GM12878 (cell line): ENCODE measurements at regions of chr6 and their contacts with region 1.

Region 1: GRCh38 chr6:131063028-131063763 is at the start of gene EPB41L2:
- DNase-seq: peak; percentile 26
- ATAC-seq: peak; percentile 82
- H3K4me3 ChIP-seq: peak within 1 kb of the TSS; percentile 88
- H3K27ac ChIP-seq: peak within 1 kb of the TSS; percentile 67
- H3K4me1 ChIP-seq: peaks cover 6% of the 10 kb centered on the region
- H3K27me3 ChIP-seq: no peaks in the 10 kb centered on the region
- CTCF ChIP-seq: no peak
- EP300 ChIP-seq: no peak
- POLR2A ChIP-seq: peak; percentile 92
- RAD21 ChIP-seq: 0 out of 2 replicates have a peak, but pooled peaks have one; percentile 14
- polyA plus RNA-seq, gene EPB41L2: 7.4 to 10.3 TPM

Region 2: GRCh38 chr6:130906736-130907381 is 156.3 kb before region 1 on chr6:
- CTCF ChIA-PET with region 1: no interaction called
- POLR2A ChIA-PET with region 1: no interaction called
- RAD21 ChIA-PET with region 1: interaction called, 5 read pairs
- SMC1A ChIA-PET with region 1: no interaction called
- in situ Hi-C with region 1: no loop called
- intact Hi-C with region 1: loop called (anchors 5 kb)
- DNase-seq: no peak
- ATAC-seq: peak; percentile 65
- H3K4me3 ChIP-seq: no peak overlapping the region
- H3K27ac ChIP-seq: no peak overlapping the region
- H3K4me1 ChIP-seq: peaks cover 15% of the 10 kb centered on the region
- H3K27me3 ChIP-seq: no peaks in the 10 kb centered on the region
- CTCF ChIP-seq: no peak
- EP300 ChIP-seq: no peak
- POLR2A ChIP-seq: no peak
- RAD21 ChIP-seq: no peak

Region 3: GRCh38 chr6:130937942-130938604 is 125.1 kb before region 1 on chr6:
- CTCF ChIA-PET with region 1: no interaction called
- POLR2A ChIA-PET with region 1: no interaction called
- RAD21 ChIA-PET with region 1: no interaction called
- SMC1A ChIA-PET with region 1: no interaction called
- in situ Hi-C with region 1: no loop called
- intact Hi-C with region 1: no loop called
- DNase-seq: no peak
- ATAC-seq: no peak
- H3K4me3 ChIP-seq: no peak overlapping the region
- H3K27ac ChIP-seq: no peak overlapping the region
- H3K4me1 ChIP-seq: no peaks in the 10 kb centered on the region
- H3K27me3 ChIP-seq: no peaks in the 10 kb centered on the region
- CTCF ChIP-seq: no peak
- EP300 ChIP-seq: no peak
- POLR2A ChIP-seq: no peak
- RAD21 ChIP-seq: no peak

Region 4: DNA sequence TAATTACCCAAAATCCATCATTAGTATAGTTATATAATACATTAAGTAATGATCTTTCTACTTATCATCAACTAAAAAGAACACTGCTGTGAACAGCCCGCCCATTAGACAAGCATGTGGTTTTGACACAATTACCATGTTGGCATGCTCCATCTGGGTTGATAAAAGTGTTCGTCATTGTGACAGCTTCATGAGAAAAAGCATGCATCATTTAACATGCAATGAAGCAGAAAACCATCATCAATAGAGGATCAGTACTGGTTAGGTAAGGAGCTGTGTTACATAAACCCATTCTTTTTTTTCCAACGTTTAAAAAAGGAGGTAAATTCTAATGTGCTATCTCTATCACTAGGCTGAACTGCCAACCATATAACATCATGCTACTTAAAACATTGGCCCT is 102.0 kb before region 1 on chr6:
- CTCF ChIA-PET with region 1: interaction called, 4 read pairs
- POLR2A ChIA-PET with region 1: no interaction called
- RAD21 ChIA-PET with region 1: no interaction called
- SMC1A ChIA-PET with region 1: interaction called, 5 read pairs
- in situ Hi-C with region 1: no loop called
- intact Hi-C with region 1: loop called (anchors 5 kb)
- DNase-seq: peak; percentile 57
- ATAC-seq: peak; percentile 82
- H3K4me3 ChIP-seq: no peak overlapping the region
- H3K27ac ChIP-seq: no peak overlapping the region
- H3K4me1 ChIP-seq: peaks cover 8% of the 10 kb centered on the region
- H3K27me3 ChIP-seq: no peaks in the 10 kb centered on the region
- CTCF ChIP-seq: no peak
- EP300 ChIP-seq: peak in 1 of 2 experiments; percentile 33; a peak in 1 of 4 replicates
- POLR2A ChIP-seq: no peak
- RAD21 ChIP-seq: no peak

Region 5: GRCh38 chr6:131107151-131107550 is 44.0 kb after region 1 on chr6:
- CTCF ChIA-PET with region 1: interaction called, 4 read pairs
- POLR2A ChIA-PET with region 1: interaction called, 3 read pairs
- RAD21 ChIA-PET with region 1: interaction called, 3 read pairs
- SMC1A ChIA-PET with region 1: interaction called, 3 read pairs
- in situ Hi-C with region 1: no loop called
- intact Hi-C with region 1: loop called (anchors 2 kb)
- DNase-seq: no peak
- ATAC-seq: peak; percentile 41
- H3K4me3 ChIP-seq: no peak overlapping the region
- H3K27ac ChIP-seq: no peak overlapping the region
- H3K4me1 ChIP-seq: peaks cover 11% of the 10 kb centered on the region; the same call in 1 of the 2 replicates
- H3K27me3 ChIP-seq: no peaks in the 10 kb centered on the region
- CTCF ChIP-seq: no peak
- EP300 ChIP-seq: no peak
- POLR2A ChIP-seq: no peak
- RAD21 ChIP-seq: no peak